ENCODE measurements at regions of chr10 and their contacts with region 1.

Region 1: DNA sequence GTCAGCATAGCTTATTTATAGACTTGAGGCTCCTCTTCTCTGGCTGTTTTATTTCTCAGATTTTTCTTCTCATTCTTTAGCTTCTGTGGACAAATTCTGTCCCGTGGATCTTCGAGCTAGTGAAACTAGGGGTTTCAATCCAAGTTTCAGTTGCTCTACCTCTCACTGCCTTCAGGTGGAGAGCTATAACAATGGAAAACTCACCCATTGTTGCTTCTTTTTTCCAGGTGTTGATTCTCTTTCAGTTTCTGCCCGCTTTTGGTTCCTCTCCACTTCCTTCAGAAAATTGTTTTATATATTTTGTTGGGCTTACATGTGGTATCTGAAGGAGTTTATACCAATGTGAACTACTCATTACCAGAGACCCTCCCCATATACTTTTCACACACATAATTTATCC is 266.1 kb downstream of the TCF7L2 start:
- DNase-seq: peak; percentile 50
- ATAC-seq: peak; percentile 54; the same call in 1 of the 2 replicates
- H3K4me3 ChIP-seq: no peak overlapping the region
- H3K27ac ChIP-seq: no peak overlapping the region
- H3K4me1 ChIP-seq: no peaks in the 10 kb centered on the region
- H3K27me3 ChIP-seq: no peaks in the 10 kb centered on the region
- CTCF ChIP-seq: peak; percentile 67

Region 2: GRCh38 chr10:113267619-113268562 is 51.8 kb after region 1 on chr10:
- CTCF ChIA-PET with region 1: no interaction called
- POLR2A ChIA-PET with region 1: no interaction called
- intact Hi-C with region 1: no loop called
- DNase-seq: no peak
- ATAC-seq: no peak
- H3K4me3 ChIP-seq: no peak overlapping the region
- H3K27ac ChIP-seq: no peak overlapping the region
- H3K4me1 ChIP-seq: no peaks in the 10 kb centered on the region
- H3K27me3 ChIP-seq: no peaks in the 10 kb centered on the region
- CTCF ChIP-seq: no peak

Region 3: DNA sequence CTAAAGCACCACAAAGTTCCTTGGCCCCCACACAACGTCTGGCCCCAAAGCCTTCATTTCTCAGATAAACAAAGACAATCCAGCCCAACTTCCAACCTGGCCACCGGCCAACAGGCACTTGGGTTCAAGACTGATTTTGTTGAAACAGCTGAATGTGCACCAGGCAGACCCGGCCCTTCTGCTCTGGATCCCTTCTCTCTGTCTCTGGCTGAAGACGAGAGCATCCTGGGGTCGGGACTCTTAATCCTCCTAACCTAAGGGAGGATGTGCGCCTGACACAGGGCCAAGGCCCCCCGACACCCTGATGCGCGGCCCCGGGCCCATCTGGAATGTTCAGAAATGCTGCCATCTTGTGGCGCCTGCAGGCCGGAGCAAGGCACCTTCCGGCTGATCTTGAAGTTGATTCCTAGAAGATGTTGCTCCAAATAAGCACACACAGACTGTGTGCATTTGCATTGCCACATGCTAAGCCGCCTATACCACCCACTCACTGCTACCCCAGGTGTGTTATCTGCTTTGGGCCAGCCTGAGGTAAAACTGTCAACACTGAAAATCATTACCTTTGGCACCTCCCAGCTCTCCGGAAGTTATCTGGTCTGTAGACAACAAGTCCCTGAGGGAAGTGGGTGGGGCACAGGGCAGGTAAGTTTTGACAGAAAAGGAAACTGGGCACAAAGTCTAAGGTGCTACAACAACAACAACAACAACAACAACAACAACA is 238.4 kb after region 1 on chr10:
- CTCF ChIA-PET with region 1: interaction called, 3 read pairs
- POLR2A ChIA-PET with region 1: no interaction called
- intact Hi-C with region 1: loop called (anchors 5 kb)
- DNase-seq: peak; percentile 45
- ATAC-seq: peak; percentile 78
- H3K4me3 ChIP-seq: no peak overlapping the region
- H3K27ac ChIP-seq: no peak overlapping the region
- H3K4me1 ChIP-seq: peaks cover 4% of the 10 kb centered on the region; the same call in 1 of the 2 replicates
- H3K27me3 ChIP-seq: no peaks in the 10 kb centered on the region
- CTCF ChIP-seq: peak; percentile 82